ENCODE measurements at regions of chr7 and their contacts with region 1.

Region 1: DNA sequence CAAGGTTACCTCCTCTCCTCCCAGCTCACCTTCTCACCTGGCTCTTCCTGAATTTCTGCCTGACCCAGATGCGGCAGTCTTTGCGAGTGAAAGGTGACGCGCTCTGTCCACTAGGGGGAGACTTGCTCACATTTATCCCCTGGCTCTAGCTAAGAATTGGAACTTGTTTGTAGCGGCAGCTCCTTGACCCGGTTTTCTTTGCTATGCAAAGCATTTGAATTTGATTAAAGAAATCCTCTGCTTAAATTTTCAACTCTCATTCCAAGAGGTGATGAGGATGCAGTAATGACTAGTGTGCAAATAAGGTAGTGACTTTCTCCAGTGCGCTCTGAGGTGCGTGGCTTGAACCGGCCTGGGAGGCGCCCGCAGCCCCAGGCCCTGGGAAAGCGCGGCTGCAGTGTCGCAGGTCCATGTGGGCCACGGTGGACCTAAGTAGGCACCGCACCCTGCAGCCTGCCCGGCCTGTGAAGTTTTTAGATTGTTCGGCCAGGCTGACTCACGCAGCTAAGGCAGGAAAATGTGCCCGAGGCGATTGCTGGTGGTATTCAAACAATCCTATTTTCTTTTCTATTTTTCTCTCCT is 336.9 kb upstream of the NPSR1 start:
- DNase-seq: peak; percentile 7
- ATAC-seq: peak; percentile 93
- H3K4me3 ChIP-seq: no peak overlapping the region
- H3K27ac ChIP-seq: no peak overlapping the region
- H3K4me1 ChIP-seq: no peaks in the 10 kb centered on the region
- H3K27me3 ChIP-seq: 0 out of 4 replicates have a peak, but pooled peaks cover 0 to 1% of the 10 kb centered on the region in 2 experiments
- CTCF ChIP-seq: peak; percentile 83 to 92 (median 89)
- EP300 ChIP-seq: no peak
- POLR2A ChIP-seq: no peak
- RAD21 ChIP-seq: peak; percentile 79

Region 2: GRCh38 chr7:33916357-33917081 is 404.6 kb before region 1 on chr7:
- CTCF ChIA-PET with region 1: no interaction called
- POLR2A ChIA-PET with region 1: no interaction called
- RAD21 ChIA-PET with region 1: no interaction called
- SMC1A ChIA-PET with region 1: no interaction called
- in situ Hi-C with region 1: no loop called
- intact Hi-C with region 1: no loop called
- DNase-seq: no peak
- ATAC-seq: no peak
- H3K4me3 ChIP-seq: no peak overlapping the region
- H3K27ac ChIP-seq: no peak overlapping the region
- H3K4me1 ChIP-seq: no peaks in the 10 kb centered on the region
- H3K27me3 ChIP-seq: no peaks in the 10 kb centered on the region; a peak in 1 of 4 replicates
- CTCF ChIP-seq: no peak
- EP300 ChIP-seq: no peak
- POLR2A ChIP-seq: no peak
- RAD21 ChIP-seq: no peak

Region 3: DNA sequence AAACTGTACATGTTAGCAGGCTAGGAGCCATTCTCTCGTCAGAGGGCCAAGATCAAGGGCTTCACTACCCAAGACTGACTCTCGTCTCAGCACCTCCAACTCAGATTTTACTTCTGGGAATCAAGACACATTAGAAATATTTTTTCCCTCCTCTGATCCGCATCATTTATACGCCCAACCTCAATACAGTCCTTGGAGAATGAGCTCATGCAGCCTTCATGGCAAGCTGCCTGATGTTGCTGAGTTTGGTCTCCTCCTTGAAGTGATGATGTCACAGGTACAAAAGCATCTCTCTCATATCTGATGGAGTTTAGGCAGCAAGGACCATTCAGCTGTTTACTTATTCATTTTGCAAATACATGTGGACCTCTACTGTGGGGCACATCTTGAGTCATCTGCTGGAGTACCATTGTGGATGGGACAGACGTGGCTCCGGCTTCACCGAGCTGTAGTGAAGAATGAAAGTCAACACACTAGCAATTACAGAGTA is 301.7 kb before region 1 on chr7:
- CTCF ChIA-PET with region 1: no interaction called
- POLR2A ChIA-PET with region 1: no interaction called
- RAD21 ChIA-PET with region 1: no interaction called
- SMC1A ChIA-PET with region 1: no interaction called
- in situ Hi-C with region 1: no loop called
- intact Hi-C with region 1: no loop called
- DNase-seq: no peak
- ATAC-seq: no peak
- H3K4me3 ChIP-seq: no peak overlapping the region
- H3K27ac ChIP-seq: no peak overlapping the region
- H3K4me1 ChIP-seq: no peaks in the 10 kb centered on the region
- H3K27me3 ChIP-seq: no peaks in the 10 kb centered on the region
- CTCF ChIP-seq: no peak
- EP300 ChIP-seq: no peak
- POLR2A ChIP-seq: no peak
- RAD21 ChIP-seq: no peak

Region 4: DNA sequence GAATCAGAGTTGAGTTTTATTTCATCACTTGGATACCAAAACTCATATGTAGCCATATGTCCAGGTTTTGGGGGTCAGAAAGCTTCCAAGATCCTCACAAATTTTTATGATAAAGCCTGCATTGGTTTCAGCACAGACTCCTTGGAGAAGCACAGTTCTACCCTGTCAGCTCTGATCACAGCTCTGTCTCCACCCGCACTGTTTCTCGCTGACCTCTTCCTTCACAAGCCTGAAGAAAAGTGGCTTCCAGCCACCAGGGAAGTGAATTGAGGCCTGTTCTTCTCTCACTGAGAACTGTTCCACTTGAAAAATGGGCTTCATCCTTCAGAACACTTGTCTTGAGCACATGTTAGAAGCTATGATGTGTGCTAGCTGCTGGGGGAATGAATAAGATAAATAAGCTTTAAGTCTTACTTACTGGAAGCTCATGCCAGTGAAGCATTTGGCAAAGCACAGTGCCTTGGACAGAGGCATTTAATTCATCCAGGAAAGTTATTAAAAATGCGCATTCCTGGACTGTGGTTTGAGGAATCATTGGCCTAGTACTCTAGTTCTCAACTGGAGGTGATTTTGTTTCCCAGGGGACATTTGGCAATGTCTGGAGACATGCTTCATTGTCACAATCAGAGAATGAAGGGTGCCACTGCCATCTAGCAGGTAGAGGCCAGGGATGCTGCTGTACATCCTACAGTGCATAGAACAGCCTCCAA is 282.1 kb before region 1 on chr7:
- CTCF ChIA-PET with region 1: no interaction called
- POLR2A ChIA-PET with region 1: no interaction called
- RAD21 ChIA-PET with region 1: no interaction called
- SMC1A ChIA-PET with region 1: no interaction called
- in situ Hi-C with region 1: no loop called
- intact Hi-C with region 1: no loop called
- DNase-seq: no peak
- ATAC-seq: no peak
- H3K4me3 ChIP-seq: no peak overlapping the region
- H3K27ac ChIP-seq: no peak overlapping the region
- H3K4me1 ChIP-seq: no peaks in the 10 kb centered on the region
- H3K27me3 ChIP-seq: no peaks in the 10 kb centered on the region
- CTCF ChIP-seq: no peak
- EP300 ChIP-seq: no peak
- POLR2A ChIP-seq: no peak
- RAD21 ChIP-seq: no peak

Region 5: DNA sequence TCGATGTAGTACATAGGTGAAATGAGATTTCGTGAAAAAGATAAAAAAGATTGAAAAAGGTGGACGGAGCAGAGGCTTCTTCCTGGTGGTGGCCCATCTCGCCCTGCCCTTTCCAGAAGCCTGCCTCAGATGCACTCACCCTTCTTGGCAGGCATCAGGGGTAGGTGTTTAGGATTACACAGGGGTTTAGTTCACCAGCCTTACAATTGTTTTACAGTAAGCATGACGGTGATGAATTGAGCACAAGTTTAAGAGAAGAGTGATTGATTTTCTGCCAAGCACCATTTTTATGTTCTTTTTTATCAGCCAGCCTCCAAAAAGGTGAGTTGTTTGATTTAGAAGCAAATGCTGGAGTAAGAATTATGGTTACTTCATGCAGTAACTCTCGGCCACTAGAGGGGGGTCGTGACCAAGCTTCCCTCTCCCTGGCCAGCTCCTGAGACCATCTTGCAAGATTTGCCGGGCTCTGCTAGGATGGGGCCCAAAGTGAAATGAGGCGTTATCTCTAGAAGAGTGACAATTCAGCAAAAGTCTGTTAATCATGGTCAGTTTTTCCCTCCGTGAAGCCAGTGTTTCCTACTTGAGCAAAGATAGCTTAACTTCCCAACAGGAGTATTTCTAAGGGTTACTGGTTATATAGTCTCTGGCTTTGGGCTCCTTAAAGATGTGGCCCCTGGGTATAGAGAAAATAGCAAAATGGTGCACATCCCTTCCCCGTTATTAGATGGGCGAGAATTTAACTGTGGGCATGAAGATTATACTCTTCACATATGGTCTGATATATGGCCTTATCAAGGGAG is 186.9 kb before region 1 on chr7:
- CTCF ChIA-PET with region 1: interaction called, 5 read pairs
- POLR2A ChIA-PET with region 1: no interaction called
- RAD21 ChIA-PET with region 1: interaction called, 4 read pairs
- SMC1A ChIA-PET with region 1: no interaction called
- in situ Hi-C with region 1: no loop called
- intact Hi-C with region 1: loop called (anchors 10 kb)
- DNase-seq: no peak
- ATAC-seq: peak; percentile 84
- H3K4me3 ChIP-seq: no peak overlapping the region
- H3K27ac ChIP-seq: no peak overlapping the region
- H3K4me1 ChIP-seq: no peaks in the 10 kb centered on the region
- H3K27me3 ChIP-seq: no peaks in the 10 kb centered on the region
- CTCF ChIP-seq: peak; percentile 57 to 62 (median 62)
- EP300 ChIP-seq: no peak
- POLR2A ChIP-seq: no peak
- RAD21 ChIP-seq: peak; percentile 70

Region 6: DNA sequence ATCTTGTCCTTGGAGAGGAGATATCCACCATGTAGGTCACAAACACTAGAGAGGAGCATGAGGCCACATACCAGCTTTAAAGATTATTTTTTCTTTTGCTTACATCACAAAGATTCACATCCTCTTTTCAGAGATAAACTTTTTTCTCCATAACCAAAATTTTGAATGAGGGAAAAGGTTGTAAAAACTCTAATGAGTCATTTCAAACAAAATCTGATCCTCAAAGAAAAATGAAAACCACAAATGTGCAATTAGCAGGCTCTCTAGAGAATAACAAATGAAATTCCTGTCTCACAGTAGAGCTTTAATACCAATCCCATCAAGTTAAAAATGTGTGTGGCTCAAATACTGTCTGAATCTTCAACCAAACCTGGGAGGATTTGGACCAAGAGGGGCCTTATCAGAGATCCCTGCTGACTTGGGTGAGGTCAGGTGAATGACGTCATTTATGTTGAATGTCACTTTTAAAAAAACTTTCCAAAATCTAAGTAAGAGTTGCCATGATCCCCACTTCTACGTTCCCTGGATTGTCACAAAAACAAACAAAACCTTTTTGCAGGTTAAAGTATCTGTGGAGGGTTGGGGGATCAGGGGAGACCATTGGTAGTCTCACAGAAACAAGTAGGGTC is 75.5 kb after region 1 on chr7:
- CTCF ChIA-PET with region 1: interaction called, 11 read pairs
- POLR2A ChIA-PET with region 1: no interaction called
- RAD21 ChIA-PET with region 1: interaction called, 3 read pairs
- SMC1A ChIA-PET with region 1: interaction called, 3 read pairs
- in situ Hi-C with region 1: no loop called
- intact Hi-C with region 1: no loop called
- DNase-seq: no peak
- ATAC-seq: peak; percentile 84
- H3K4me3 ChIP-seq: no peak overlapping the region
- H3K27ac ChIP-seq: no peak overlapping the region
- H3K4me1 ChIP-seq: no peaks in the 10 kb centered on the region
- H3K27me3 ChIP-seq: no peaks in the 10 kb centered on the region
- CTCF ChIP-seq: no peak
- EP300 ChIP-seq: peak in 1 of 2 experiments; percentile 73; a peak in 2 of 4 replicates
- POLR2A ChIP-seq: no peak
- RAD21 ChIP-seq: no peak

Region 7: DNA sequence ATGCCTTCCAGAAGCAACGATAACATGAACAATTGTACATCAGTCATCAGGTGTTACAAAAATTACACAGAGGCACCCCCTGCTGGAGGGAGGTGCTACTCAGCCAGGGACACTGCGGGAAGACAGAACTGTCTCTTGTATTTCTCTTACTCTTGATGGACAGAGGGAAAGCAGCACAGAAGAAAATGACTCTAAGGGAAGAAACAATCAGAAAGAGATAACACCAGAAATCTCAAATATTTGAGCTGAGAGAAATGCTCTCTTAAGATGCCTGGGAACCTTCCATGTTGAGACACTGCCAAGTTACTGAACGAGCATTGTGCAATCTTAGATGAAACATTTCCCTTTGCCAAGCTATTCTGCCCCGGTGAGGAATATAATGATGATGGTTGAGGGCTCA is 109.4 kb after region 1 on chr7:
- CTCF ChIA-PET with region 1: interaction called, 23 read pairs
- POLR2A ChIA-PET with region 1: no interaction called
- RAD21 ChIA-PET with region 1: interaction called, 6 read pairs
- SMC1A ChIA-PET with region 1: interaction called, 9 read pairs
- in situ Hi-C with region 1: no loop called
- intact Hi-C with region 1: loop called (anchors 1 kb)
- DNase-seq: no peak
- ATAC-seq: peak; percentile 80
- H3K4me3 ChIP-seq: no peak overlapping the region
- H3K27ac ChIP-seq: no peak overlapping the region
- H3K4me1 ChIP-seq: no peaks in the 10 kb centered on the region
- H3K27me3 ChIP-seq: no peaks in the 10 kb centered on the region
- CTCF ChIP-seq: peak; percentile 18 to 61 (median 43); a peak in 3 of 6 replicates
- EP300 ChIP-seq: no peak
- POLR2A ChIP-seq: no peak
- RAD21 ChIP-seq: peak; percentile 47

Region 8: GRCh38 chr7:34596892-34597291 is 275.8 kb after region 1 on chr7:
- CTCF ChIA-PET with region 1: interaction called, 74 read pairs
- POLR2A ChIA-PET with region 1: no interaction called
- RAD21 ChIA-PET with region 1: interaction called, 35 read pairs
- SMC1A ChIA-PET with region 1: interaction called, 32 read pairs
- in situ Hi-C with region 1: no loop called
- intact Hi-C with region 1: loop called (anchors 1 kb)
- DNase-seq: no peak
- ATAC-seq: peak; percentile 66
- H3K4me3 ChIP-seq: no peak overlapping the region
- H3K27ac ChIP-seq: no peak overlapping the region
- H3K4me1 ChIP-seq: no peaks in the 10 kb centered on the region
- H3K27me3 ChIP-seq: no peaks in the 10 kb centered on the region
- CTCF ChIP-seq: peak; percentile 15 to 48 (median 27); a peak in 3 of 6 replicates
- EP300 ChIP-seq: no peak
- POLR2A ChIP-seq: no peak
- RAD21 ChIP-seq: peak; percentile 56